ENCODE measurements at regions of chr2 and their contacts with region 1.

Region 1: GRCh38 chr2:41914936-41915335 is 132.9 kb upstream of the PKDCC start:
- DNase-seq: no peak
- H3K4me3 ChIP-seq: no peak overlapping the region
- CTCF ChIP-seq: no peak
- POLR2A ChIP-seq: no peak

Region 2: GRCh38 chr2:40680547-40680946 is 1234.4 kb before region 1 on chr2:
- intact Hi-C with region 1: loop called (anchors 5 kb)
- DNase-seq: no peak
- H3K4me3 ChIP-seq: no peak overlapping the region
- CTCF ChIP-seq: no peak
- POLR2A ChIP-seq: no peak

Measured in lower leg skin (tissue), 4 donors.